ENCODE measurements at regions of chr1 and their contacts with region 1.

Region 1: DNA sequence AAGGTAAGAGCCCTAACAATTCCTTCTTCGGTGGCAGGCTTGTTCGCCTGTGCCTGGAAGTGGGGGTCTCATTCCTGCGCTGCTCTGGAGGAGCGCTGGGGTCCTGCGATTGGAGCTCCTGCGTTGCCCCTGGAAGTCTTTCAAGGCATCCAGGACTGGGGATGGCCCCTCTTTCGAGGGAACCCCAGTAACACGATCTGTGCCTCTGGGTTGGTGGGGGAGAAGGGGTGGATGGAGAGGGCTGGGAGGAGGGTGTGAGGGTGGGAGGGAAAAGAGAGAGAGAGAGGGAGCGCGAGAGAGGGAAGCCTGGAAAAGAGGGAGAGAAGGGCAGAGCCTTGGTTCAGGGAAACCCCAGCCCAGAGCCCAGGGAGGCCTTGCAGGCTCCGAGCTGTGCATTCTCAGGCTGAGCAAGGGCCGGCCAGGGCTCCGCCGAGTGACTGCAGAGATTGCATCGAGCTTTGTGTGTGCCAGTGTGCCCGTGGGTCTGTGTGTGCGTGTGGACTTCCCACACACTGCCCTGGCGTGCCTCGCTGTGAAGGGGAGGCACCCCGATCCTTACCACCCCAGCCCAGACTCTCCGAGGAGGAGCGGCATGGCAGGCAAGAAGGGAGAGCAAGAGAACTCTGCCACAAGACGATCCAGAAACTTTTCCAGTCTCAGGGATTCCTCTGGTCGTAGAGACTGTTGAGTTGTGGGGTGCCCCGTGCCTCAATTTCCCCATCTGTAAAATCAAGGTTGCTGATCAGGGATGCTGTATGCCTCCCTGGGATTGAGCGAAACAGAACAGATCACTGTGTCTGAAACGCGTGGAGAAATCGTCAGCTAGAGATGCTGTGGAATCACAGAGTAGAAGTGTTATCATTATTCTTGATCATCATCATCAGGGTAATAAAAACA is 619 bp downstream of the BCL9 start:
- DNase-seq: peak; percentile 41
- ATAC-seq: peak; percentile 39
- H3K4me3 ChIP-seq: peak overlapping the region; percentile 82
- H3K27ac ChIP-seq: peak overlapping the region; percentile 52
- H3K4me1 ChIP-seq: peaks cover 61% of the 10 kb centered on the region
- H3K27me3 ChIP-seq: no peaks in the 10 kb centered on the region
- CTCF ChIP-seq: no peak

Region 2: GRCh38 chr1:147052143-147052542 is 489.8 kb before region 1 on chr1:
- CTCF ChIA-PET with region 1: no interaction called
- POLR2A ChIA-PET with region 1: no interaction called
- intact Hi-C with region 1: no loop called
- DNase-seq: no peak
- ATAC-seq: no peak
- H3K4me3 ChIP-seq: no peak overlapping the region
- H3K27ac ChIP-seq: no peak overlapping the region
- H3K4me1 ChIP-seq: peaks cover 2% of the 10 kb centered on the region
- H3K27me3 ChIP-seq: no peaks in the 10 kb centered on the region
- CTCF ChIP-seq: no peak

Region 3: DNA sequence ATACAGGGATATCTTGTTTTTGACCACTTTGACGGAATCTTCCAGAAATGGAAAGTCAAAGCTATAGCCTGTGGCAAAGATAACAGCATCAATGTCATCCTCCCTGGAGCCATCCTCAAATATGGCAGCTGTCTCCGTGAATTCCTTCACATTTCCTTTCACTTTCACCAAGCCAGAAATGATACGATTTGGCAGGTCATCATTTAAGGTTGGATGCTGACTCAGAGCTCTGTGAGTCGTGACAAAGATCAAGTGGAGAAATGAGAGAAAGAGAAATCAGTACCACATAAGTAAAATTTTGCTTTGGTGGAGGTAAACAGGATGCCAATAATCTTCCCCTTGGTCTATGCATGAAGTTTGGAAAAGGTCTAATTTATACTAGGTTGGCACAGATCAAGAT is 340.6 kb before region 1 on chr1:
- CTCF ChIA-PET with region 1: no interaction called
- POLR2A ChIA-PET with region 1: interaction called, 22 read pairs
- intact Hi-C with region 1: no loop called
- DNase-seq: peak; percentile 40
- ATAC-seq: 0 out of 2 replicates have a peak, but pooled peaks have one; percentile 31
- H3K4me3 ChIP-seq: no peak overlapping the region
- H3K27ac ChIP-seq: no peak overlapping the region
- H3K4me1 ChIP-seq: no peaks in the 10 kb centered on the region
- H3K27me3 ChIP-seq: no peaks in the 10 kb centered on the region
- CTCF ChIP-seq: no peak

Region 4: DNA sequence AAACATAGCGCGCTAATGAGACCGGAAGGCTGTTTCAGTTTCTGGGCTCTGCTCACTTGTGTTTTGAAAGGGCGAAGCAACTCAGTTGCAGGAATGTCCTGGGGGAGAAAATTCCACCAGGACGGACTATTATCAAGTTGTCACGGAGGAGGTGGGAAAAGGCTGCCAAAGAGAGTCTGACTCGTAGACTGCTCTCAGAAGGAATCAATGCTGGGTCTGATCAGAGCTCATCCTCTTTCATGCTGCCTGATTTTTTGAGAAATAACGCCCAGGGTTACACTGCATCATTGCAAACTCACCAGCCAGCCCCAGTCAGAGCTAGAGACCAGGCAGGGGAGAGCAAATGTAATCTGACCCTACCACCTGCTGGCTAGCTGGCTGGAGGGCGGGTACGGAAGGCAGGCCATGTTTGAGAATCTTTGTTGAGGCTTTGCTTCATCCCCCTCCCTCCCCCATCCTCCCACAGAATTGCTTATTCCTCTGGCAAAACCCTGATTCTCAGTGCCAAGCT is 37.1 kb before region 1 on chr1:
- CTCF ChIA-PET with region 1: interaction called, 6 read pairs
- POLR2A ChIA-PET with region 1: no interaction called
- intact Hi-C with region 1: loop called (anchors 5 kb)
- DNase-seq: peak; percentile 49
- ATAC-seq: peak; percentile 80
- H3K4me3 ChIP-seq: no peak overlapping the region
- H3K27ac ChIP-seq: no peak overlapping the region
- H3K4me1 ChIP-seq: peaks cover 7% of the 10 kb centered on the region; the same call in 1 of the 2 replicates
- H3K27me3 ChIP-seq: no peaks in the 10 kb centered on the region
- CTCF ChIP-seq: no peak

Region 5: GRCh38 chr1:147599362-147600118 is 57.6 kb after region 1 on chr1:
- CTCF ChIA-PET with region 1: interaction called, 6 read pairs
- POLR2A ChIA-PET with region 1: interaction called, 22 read pairs
- intact Hi-C with region 1: loop called (anchors 1 kb)
- DNase-seq: peak; percentile 94
- ATAC-seq: peak; percentile 82
- H3K4me3 ChIP-seq: peak overlapping the region; percentile 75
- H3K27ac ChIP-seq: peak overlapping the region; percentile 32; the same call in 1 of the 2 replicates
- H3K4me1 ChIP-seq: peaks cover 18% of the 10 kb centered on the region
- H3K27me3 ChIP-seq: no peaks in the 10 kb centered on the region
- CTCF ChIP-seq: no peak

Region 6: DNA sequence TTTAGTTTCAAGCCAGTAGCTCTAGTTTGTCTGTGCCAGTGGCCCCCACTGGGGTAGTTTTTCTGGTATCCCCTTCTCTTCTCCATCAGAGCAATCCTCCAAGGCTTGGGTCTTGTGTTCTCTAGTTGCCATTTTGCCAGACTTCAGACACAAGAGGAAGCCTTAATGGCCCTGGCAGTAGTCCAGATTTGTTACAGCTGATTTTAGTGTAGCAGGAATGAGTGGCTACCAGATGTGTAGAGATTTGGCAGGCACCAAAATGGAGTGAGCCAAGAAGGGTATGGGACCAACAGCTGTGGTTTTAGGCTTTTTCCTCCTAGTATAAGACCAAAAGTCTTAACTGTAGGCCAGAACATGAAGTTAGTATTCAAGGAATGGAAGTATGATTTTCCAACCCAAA is 71.6 kb after region 1 on chr1:
- CTCF ChIA-PET with region 1: no interaction called
- POLR2A ChIA-PET with region 1: no interaction called
- intact Hi-C with region 1: no loop called
- DNase-seq: no peak
- ATAC-seq: no peak
- H3K4me3 ChIP-seq: no peak overlapping the region
- H3K27ac ChIP-seq: no peak overlapping the region
- H3K4me1 ChIP-seq: peaks cover 23% of the 10 kb centered on the region
- H3K27me3 ChIP-seq: no peaks in the 10 kb centered on the region
- CTCF ChIP-seq: no peak